ENCODE measurements at regions of chr9 and their contacts with region 1.

Region 1: DNA sequence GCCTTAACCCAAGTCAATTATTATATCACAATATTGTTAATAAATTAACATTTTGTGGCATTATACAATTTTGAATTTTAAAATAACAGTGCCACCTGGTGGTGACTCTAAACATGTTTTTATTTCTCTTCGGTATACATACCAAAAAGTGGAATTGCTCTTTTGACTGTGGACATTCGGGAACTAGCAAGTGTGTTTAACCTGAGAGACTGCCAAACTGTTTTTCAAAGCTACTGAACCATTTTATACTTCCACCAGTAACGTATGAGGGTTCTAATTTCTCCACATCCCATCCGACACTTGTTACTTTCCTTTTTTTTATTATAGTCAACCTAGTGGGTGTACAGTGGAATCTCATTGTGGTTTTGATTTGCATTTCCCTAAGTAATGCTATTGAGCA is 18.3 kb upstream of the HSDL2 start:
- DNase-seq: peak; percentile 29
- H3K4me3 ChIP-seq: no peak overlapping the region
- H3K27ac ChIP-seq: no peak overlapping the region
- H3K4me1 ChIP-seq: peaks cover 6% of the 10 kb centered on the region
- H3K27me3 ChIP-seq: no peaks in the 10 kb centered on the region
- CTCF ChIP-seq: peak; percentile 24 to 31

Region 2: DNA sequence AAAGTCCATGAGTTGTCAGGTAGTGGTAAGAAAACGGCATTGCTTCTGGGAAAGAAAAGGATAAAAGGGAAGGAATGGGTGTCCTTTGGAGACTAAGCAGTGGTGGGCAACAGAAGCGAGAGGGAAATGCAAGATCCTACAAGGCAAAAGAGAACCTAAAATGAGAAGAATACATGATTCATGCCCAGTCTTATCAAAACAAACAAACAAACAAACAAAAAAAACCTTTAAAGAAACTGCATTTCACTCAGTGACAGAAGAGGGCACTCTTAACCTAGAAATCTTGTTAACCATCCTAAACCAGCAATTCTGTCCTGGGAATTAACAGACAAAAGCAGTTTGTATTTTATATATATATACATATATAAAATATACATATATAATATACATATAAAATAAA is 275.0 kb before region 1 on chr9:
- CTCF ChIA-PET with region 1: no interaction called
- dilution Hi-C with region 1: no loop called
- in situ Hi-C with region 1: no loop called
- intact Hi-C with region 1: loop called (anchors 2 kb)
- DNase-seq: no peak
- H3K4me3 ChIP-seq: no peak overlapping the region
- H3K27ac ChIP-seq: no peak overlapping the region
- H3K4me1 ChIP-seq: no peaks in the 10 kb centered on the region
- H3K27me3 ChIP-seq: no peaks in the 10 kb centered on the region
- CTCF ChIP-seq: peak; percentile 41 to 48

Region 3: DNA sequence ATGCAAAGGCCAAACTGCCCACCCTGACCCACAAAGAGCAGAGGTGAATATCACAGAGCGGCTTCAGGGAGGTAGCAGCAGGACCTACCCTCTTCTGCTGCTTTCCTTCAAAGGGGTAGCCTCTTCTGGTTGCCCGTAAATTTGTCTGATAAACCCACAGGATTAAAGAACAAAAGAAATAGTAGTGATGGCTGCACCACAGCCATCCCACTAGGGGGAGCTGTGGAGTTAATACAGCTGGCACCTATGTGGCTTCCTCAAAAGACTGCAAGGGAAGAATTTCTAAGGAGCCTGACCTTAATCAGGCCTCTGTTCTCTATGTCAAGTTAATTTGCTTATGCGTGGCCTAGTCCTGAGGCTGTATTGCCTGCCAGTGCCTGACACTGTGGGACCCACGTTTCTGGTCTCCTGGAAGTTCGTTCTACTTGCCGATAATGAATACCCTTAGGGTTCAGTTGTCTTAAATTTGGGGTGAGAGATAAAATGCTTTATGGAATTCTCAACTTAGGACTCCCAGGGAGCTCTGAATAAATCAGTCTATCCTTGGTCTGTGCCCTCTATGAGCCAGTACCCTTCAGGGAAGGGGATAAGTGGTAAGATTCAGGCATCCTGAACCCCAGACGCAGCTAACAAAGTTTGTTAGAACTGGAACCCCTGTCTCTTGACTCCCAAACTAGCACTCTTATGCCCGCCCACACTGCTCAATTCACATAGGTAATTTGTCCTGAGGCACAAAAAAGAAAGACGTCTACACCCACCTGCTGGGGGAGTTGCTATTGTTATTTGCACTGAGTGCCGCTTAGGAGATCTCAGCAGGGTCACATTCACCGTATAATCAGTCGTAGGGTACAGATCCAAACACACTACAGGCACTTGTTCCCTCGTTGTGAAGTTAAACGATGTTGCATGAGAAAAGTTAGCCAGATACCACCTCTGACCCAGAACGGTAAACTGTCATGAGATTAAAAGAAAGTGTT is 263.6 kb before region 1 on chr9:
- CTCF ChIA-PET with region 1: interaction called, 4 read pairs
- dilution Hi-C with region 1: no loop called
- in situ Hi-C with region 1: loop called in 1 of 2 experiments (anchors 5 kb)
- intact Hi-C with region 1: loop called (anchors 1 kb)
- DNase-seq: peak; percentile 55
- H3K4me3 ChIP-seq: no peak overlapping the region
- H3K27ac ChIP-seq: no peak overlapping the region
- H3K4me1 ChIP-seq: no peaks in the 10 kb centered on the region
- H3K27me3 ChIP-seq: no peaks in the 10 kb centered on the region
- CTCF ChIP-seq: peak; percentile 83 to 86

Region 4: DNA sequence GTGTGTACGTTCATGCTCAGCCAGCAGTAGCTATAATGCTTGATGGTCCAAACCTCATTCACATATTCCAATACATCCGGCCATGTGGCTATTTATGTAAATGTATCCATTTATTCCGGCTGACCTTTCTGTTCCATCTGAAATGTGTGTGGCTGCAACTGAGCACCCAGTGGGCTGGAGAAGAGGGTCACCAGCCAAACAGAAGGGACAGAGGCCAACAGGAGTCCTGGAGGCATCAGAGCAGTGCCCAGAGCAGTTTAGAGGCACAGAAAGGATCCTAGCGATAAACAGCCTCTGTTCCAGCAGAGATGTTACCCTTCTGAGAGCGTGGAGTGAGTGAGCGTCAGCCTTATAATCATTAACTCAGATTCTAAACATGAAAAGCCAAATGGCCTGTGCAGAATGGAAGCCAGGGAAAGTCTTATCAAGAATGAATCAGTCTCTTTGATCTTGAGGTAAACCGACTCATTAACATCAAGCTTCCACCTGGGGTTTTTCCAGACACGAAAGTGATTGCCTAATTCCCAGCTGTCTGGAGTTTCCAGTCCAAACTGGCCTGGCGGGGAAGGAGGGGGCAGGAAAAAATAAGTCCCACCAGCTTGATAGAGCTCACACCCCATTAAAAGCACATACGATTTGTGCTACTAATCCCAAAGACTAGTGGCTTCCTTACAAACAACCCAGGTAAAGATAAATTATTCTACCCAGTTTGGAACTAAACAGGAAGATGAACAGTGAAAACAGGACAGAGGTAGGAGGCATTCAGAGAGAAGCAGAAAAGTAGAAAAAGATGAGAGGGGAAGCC is 242.2 kb before region 1 on chr9:
- CTCF ChIA-PET with region 1: no interaction called
- dilution Hi-C with region 1: no loop called
- in situ Hi-C with region 1: loop called in 1 of 2 experiments (anchors 5 kb)
- intact Hi-C with region 1: no loop called
- DNase-seq: peak; percentile 83
- H3K4me3 ChIP-seq: no peak overlapping the region
- H3K27ac ChIP-seq: no peak overlapping the region
- H3K4me1 ChIP-seq: peaks cover 5% of the 10 kb centered on the region
- H3K27me3 ChIP-seq: no peaks in the 10 kb centered on the region
- CTCF ChIP-seq: no peak

Region 5: GRCh38 chr9:112166172-112167140 is 195.1 kb before region 1 on chr9:
- CTCF ChIA-PET with region 1: interaction called, 3 read pairs
- dilution Hi-C with region 1: no loop called
- in situ Hi-C with region 1: no loop called
- intact Hi-C with region 1: loop called (anchors 1 kb)
- DNase-seq: peak; percentile 98
- H3K4me3 ChIP-seq: no peak overlapping the region
- H3K27ac ChIP-seq: peak overlapping the region; percentile 88
- H3K4me1 ChIP-seq: peaks cover 38% of the 10 kb centered on the region
- H3K27me3 ChIP-seq: no peaks in the 10 kb centered on the region
- CTCF ChIP-seq: peak; percentile 47 to 49

Region 6: GRCh38 chr9:112203536-112203935 is 158.1 kb before region 1 on chr9:
- CTCF ChIA-PET with region 1: no interaction called
- dilution Hi-C with region 1: loop called (anchors 5 kb)
- in situ Hi-C with region 1: no loop called
- intact Hi-C with region 1: no loop called
- DNase-seq: peak; percentile 60
- H3K4me3 ChIP-seq: no peak overlapping the region
- H3K27ac ChIP-seq: peak overlapping the region; percentile 28
- H3K4me1 ChIP-seq: peaks cover 15% of the 10 kb centered on the region
- H3K27me3 ChIP-seq: no peaks in the 10 kb centered on the region
- CTCF ChIP-seq: no peak

Region 7: DNA sequence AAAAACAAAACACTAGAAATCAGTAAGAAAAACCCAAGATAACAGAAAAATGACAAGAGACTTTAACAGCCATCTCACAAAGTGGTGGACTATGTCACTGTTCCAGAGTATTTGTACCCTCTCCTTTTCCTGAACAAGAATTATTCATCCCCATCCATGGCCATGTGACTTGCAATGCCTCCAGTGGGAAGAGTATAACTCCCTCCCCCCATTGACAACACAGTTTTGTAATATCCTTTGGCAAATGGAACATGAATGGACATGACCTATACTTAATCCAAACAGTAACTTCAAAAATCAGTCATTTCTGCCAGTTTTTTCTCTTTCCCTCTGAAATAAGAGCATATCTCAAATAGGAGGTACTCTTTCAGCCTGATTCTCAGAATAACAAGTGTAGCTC is 62.1 kb before region 1 on chr9:
- CTCF ChIA-PET with region 1: no interaction called
- dilution Hi-C with region 1: no loop called
- in situ Hi-C with region 1: no loop called
- intact Hi-C with region 1: no loop called
- DNase-seq: peak; percentile 85
- H3K4me3 ChIP-seq: peak overlapping the region in 2 of 3 experiments; percentile 15 to 25
- H3K27ac ChIP-seq: peak overlapping the region; percentile 74
- H3K4me1 ChIP-seq: peaks cover 22% of the 10 kb centered on the region
- H3K27me3 ChIP-seq: no peaks in the 10 kb centered on the region
- CTCF ChIP-seq: no peak